HepG2 (cell line): ENCODE measurements at regions of chr3 and their contacts with region 1.

Region 1: GRCh38 chr3:71875461-71875947 is 90.6 kb upstream of the PROK2 start:
- DNase-seq: peak; percentile 43
- ATAC-seq: peak; percentile 99
- H3K4me3 ChIP-seq: no peak overlapping the region
- H3K27ac ChIP-seq: no peak overlapping the region
- H3K4me1 ChIP-seq: no peaks in the 10 kb centered on the region
- H3K27me3 ChIP-seq: no peaks in the 10 kb centered on the region
- CTCF ChIP-seq: peak; percentile 91
- EP300 ChIP-seq: no peak
- POLR2A ChIP-seq: no peak
- RAD21 ChIP-seq: peak; percentile 68

Region 2: DNA sequence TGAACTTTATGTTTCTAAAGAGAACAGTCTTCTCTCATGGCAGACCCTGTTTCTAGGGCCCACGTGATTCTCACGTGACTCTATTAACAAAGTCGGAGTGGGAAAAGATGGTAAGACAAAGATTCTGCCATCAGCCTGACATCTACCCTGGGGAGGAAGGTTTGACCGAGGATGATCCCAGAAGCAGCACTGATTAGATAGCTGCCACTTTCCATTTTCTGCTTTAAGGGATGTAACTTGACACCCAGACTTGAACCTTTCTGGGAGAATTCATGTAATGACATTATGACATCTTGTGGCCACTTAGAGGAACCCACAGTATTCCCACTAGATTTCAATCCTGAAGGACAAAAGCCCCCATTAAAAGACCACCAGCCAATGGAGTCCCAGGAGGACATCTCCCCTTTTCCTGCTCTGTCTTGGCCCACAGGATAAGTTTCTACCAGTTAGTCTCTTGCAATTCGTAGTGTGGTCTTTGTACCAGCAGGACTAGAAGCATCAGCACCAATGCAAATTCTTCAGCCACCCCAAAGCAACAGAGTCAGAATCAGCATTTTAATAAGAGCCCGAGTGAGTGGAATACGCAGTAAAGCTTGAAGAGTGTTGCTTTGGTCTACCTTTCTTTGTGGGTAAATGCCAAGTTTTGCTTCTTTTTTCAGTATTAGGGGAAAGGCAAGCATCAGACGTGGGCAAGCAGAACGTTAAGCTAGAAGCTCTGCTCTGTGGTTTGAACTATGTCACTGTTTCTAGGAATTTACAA is 389.9 kb after region 1 on chr3:
- CTCF ChIA-PET with region 1: no interaction called
- POLR2A ChIA-PET with region 1: no interaction called
- in situ Hi-C with region 1: no loop called
- intact Hi-C with region 1: loop called (anchors 2 kb)
- DNase-seq: no peak
- ATAC-seq: no peak; the same call in 2 of the 3 replicates
- H3K4me3 ChIP-seq: no peak overlapping the region
- H3K27ac ChIP-seq: no peak overlapping the region
- H3K4me1 ChIP-seq: peaks cover 20% of the 10 kb centered on the region
- H3K27me3 ChIP-seq: no peaks in the 10 kb centered on the region; a peak in 1 of 5 replicates
- CTCF ChIP-seq: peak; percentile 44
- EP300 ChIP-seq: no peak
- POLR2A ChIP-seq: no peak
- RAD21 ChIP-seq: no peak